Thyroid gland (tissue), 4 donors: ENCODE measurements at regions of chr1 and their contacts with region 1.

Region 1: GRCh38 chr1:155562581-155563376 is at the start of gene ASH1L:
- DNase-seq: peak; percentile 92 to 95
- H3K4me3 ChIP-seq: peak within 1 kb of the TSS; percentile 76 to 99 (median 95)
- H3K27ac ChIP-seq: peak within 1 kb of the TSS; percentile 98 to 100 (median 98)
- H3K4me1 ChIP-seq: peaks cover 15 to 30% of the 10 kb centered on the region in 2 donors
- H3K27me3 ChIP-seq: no peaks in the 10 kb centered on the region
- CTCF ChIP-seq: peak in 1 of 6 experiments; percentile 27
- POLR2A ChIP-seq: peak; percentile 76 to 92
- total RNA-seq, gene ASH1L: 68.1 to 120 (median 85.2) TPM

Region 2: DNA sequence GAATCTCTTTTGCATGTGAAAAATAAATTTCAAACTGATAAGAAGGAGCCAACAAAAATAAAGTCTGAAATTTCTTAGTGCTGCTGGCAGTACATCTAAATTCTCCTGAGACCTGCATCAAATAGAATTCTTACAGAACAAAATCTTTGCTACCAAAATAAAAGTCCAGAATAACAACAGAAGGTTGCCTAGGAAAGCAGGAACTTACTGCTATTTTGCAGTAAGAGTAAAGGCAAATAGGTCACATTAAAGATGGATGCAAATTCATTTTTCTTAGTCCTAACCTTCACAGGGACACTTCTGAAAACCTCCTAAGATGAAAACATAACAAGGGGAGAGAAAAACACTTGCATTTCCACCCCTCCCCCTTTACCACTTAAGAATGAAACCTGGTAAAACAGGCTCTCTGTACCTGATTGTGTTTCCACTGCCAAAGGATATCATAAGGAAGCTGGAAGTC is 183.1 kb before region 1 on chr1:
- intact Hi-C with region 1: loop called (anchors 10 kb)
- DNase-seq: peak in 1 of 2 donors; percentile 5
- H3K4me3 ChIP-seq: no peak overlapping the region
- H3K27ac ChIP-seq: peak overlapping the region; percentile 35 to 56 (median 44)
- H3K4me1 ChIP-seq: peaks cover 6 to 21% of the 10 kb centered on the region in 2 donors
- H3K27me3 ChIP-seq: no peaks in the 10 kb centered on the region
- CTCF ChIP-seq: no peak
- POLR2A ChIP-seq: no peak

Region 3: GRCh38 chr1:155527677-155528076 is 35.1 kb before region 1 on chr1:
- intact Hi-C with region 1: no loop called
- DNase-seq: no peak
- H3K4me3 ChIP-seq: no peak overlapping the region
- H3K27ac ChIP-seq: no peak overlapping the region
- H3K4me1 ChIP-seq: peaks cover 9 to 29% of the 10 kb centered on the region in 2 donors
- H3K27me3 ChIP-seq: no peaks in the 10 kb centered on the region
- CTCF ChIP-seq: no peak
- POLR2A ChIP-seq: no peak